GM10248 (cell line): ENCODE measurements at regions of chr11 and their contacts with region 1.

Region 1: GRCh38 chr11:73350908-73351636 is 25.1 kb upstream of the RELT start:
- DNase-seq: peak; percentile 85
- CTCF ChIP-seq: peak; percentile 94

Region 2: DNA sequence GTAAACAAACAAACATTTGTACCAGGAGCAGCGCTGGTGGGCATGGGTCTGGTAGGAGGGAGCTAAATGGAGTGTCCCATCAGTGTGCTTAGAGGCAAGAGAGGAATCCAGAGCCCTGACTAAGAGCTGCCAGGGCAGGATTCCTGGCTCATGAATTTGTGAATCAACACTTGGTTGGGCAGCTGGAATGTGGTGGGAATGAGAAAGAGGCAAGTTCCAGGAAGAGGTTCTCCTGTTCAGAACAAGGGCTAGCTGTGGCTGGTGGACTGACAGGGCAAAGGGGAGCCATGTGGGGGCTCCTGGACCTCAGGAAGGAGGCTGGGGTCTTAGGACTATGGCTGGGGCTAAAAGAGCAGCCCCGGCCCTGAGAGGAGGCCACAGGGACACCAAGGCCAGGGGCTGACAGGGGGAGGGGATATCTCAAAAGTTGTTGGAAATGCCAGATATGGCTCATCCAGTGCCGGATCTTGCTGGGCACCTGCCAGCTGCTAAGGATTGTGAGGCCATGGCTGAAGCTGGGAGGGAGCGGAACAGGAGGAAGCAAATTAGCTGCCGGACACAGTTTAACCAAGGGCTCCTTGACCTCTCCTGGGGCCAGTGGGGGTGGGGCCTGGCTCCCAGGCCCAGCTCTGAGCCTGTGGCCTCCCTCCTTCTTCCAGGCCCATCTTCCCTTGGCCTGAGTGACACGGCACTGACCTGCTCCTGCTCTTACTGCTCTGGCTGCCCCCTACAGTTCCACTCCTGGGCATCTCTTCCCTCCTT is 93.5 kb before region 1 on chr11:
- CTCF ChIA-PET with region 1: no interaction called
- POLR2A ChIA-PET with region 1: no interaction called
- DNase-seq: no peak
- CTCF ChIP-seq: no peak

Region 3: GRCh38 chr11:73295231-73295995 is 55.7 kb before region 1 on chr11:
- CTCF ChIA-PET with region 1: interaction called, 25 read pairs
- POLR2A ChIA-PET with region 1: no interaction called
- DNase-seq: peak; percentile 82
- CTCF ChIP-seq: peak; percentile 99

Region 4: GRCh38 chr11:73325036-73325981 is 25.8 kb before region 1 on chr11:
- CTCF ChIA-PET with region 1: interaction called, 39 read pairs
- POLR2A ChIA-PET with region 1: no interaction called
- DNase-seq: peak; percentile 88
- CTCF ChIP-seq: no peak

Region 5: DNA sequence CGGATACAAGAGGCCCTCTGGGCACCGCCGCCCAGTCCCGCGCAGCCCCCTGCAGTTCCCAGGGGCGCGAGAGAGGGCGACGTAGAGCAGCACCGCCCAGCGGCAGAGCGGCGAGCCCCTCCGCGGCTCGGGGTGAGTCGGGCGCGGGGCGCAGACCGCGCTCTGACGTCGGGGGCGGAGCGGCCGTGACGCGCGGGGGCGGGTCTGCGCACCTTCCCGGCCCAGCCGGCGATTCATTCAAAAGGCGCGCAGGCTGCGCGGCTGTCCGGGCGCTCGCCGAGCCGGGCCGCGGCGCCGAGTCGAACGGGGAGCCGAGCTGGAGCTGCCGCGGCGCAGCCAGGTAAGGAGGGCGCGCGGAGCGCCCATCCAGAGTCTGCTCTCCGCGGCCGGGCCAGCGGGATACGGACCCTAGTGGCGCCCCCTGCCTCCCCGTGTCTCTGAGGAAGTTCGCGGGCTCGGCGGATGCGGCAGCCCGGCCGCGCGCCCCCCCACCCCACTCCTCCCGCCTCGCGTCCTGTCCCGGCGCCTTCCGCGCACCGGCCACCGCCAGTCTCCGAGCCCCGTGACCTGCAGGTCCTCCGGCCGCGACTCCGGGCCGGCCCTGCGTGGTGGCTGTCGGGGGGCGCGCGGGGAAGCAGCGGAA is 25.2 kb after region 1 on chr11 and contains the start of gene RELT:
- CTCF ChIA-PET with region 1: interaction called, 209 read pairs
- POLR2A ChIA-PET with region 1: no interaction called
- DNase-seq: peak; percentile 98
- CTCF ChIP-seq: peak; percentile 88

Region 6: DNA sequence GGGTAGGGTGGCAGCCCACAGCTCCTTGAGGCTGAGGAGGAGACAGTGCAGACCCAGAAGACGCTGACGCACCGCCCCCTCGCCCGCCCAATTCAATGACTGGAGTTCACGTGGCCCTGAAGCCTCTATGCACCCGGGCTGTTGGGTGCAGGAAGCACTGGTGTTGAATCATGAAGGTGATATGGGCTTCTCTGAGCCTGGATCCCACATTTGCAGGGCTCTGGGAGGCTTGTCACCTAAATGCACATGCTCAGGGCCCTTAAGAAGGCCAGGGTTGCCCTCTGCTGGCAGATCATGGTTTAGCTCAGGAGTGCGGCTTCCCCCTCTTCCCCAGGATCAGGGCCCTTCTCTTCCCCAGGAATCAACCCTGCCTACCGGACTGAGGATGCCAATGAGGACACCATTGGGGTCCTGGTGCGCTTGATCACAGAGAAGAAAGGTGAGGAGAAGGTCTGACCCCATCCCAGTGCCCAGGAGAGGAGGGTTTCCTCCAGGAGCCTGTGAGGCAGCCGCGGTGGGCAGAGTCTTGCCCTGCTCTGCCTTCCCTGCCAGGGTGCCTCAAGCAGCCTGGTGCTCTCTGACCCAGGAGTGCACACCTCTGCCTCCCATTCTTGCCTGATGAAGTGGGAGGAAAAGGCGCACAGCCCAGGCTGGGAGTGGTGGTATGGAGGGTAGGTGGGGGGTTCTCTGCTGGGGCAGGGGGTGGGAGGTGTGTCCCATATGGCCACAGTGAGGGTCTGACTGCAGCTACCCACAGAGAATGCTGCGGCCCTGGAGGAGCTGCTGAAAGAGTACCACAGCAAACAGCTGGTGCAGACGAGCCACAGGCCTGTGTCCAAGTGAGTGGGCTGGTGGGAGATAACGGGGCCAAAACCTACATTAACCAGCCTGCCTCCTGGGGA is 42.7 kb after region 1 on chr11:
- CTCF ChIA-PET with region 1: interaction called, 106 read pairs
- POLR2A ChIA-PET with region 1: interaction called, 4 read pairs
- DNase-seq: peak; percentile 82
- CTCF ChIP-seq: peak; percentile 76

Region 7: GRCh38 chr11:73625696-73626318 is 274.7 kb after region 1 on chr11:
- CTCF ChIA-PET with region 1: interaction called, 11 read pairs
- POLR2A ChIA-PET with region 1: no interaction called
- DNase-seq: peak; percentile 84
- CTCF ChIP-seq: peak; percentile 85

Region 8: GRCh38 chr11:73705053-73705452 is 354.0 kb after region 1 on chr11:
- CTCF ChIA-PET with region 1: no interaction called
- POLR2A ChIA-PET with region 1: no interaction called
- DNase-seq: no peak
- CTCF ChIP-seq: no peak

Region 9: GRCh38 chr11:73902303-73902702 is 551.2 kb after region 1 on chr11:
- CTCF ChIA-PET with region 1: no interaction called
- POLR2A ChIA-PET with region 1: no interaction called
- DNase-seq: no peak
- CTCF ChIP-seq: no peak